ENCODE measurements at regions of chr13 and their contacts with region 1.

Region 1: DNA sequence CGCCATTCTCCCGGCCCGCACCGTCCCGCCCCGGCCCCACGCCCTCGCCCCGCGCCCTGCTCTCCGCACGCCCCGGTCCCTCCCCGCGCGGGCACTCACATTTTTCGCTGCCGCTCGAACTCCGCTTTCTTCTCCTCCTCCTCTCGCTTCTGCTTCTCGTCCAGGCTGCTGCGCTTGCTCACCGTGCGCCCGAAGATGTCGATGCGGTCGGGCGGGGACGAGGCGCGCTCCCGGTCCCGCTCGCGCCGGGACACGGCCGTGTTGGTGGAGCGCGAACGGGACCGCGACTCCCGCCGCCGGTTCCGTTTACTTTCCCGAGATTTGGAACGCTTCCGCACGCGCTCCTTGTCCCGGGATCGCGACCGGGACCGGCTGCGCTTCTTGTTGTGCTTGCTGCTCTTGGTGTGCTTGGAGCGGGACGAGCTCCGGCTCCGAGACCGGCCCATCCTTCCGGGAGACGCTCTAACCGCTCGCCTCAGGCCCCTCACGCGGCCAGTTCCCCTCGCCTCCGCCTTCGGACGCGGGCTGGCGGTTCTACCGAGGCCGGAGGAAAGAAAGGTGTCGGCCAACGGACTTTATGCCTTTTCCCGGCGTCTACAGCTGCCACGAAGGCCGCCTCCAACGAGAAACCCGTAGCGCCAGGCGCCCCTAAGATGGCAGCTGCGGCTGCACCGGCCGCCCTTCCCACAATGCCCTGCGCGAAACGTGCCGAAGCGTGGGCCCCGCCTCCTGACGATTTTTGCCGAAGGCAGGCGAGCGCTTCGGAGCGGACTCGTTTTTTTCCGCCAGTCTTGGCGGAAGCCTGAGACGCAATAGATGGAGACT is at the start of gene ARGLU1:
- DNase-seq: peak; percentile 95
- H3K4me3 Mint-ChIP-seq: peak within 1 kb of the TSS; percentile 92
- H3K27ac Mint-ChIP-seq: peak within 1 kb of the TSS; percentile 96
- H3K4me1 Mint-ChIP-seq: peaks cover 45% of the 10 kb centered on the region
- H3K27me3 Mint-ChIP-seq: no peaks in the 10 kb centered on the region
- total RNA-seq, gene ARGLU1: 119 to 132 TPM

Region 2: DNA sequence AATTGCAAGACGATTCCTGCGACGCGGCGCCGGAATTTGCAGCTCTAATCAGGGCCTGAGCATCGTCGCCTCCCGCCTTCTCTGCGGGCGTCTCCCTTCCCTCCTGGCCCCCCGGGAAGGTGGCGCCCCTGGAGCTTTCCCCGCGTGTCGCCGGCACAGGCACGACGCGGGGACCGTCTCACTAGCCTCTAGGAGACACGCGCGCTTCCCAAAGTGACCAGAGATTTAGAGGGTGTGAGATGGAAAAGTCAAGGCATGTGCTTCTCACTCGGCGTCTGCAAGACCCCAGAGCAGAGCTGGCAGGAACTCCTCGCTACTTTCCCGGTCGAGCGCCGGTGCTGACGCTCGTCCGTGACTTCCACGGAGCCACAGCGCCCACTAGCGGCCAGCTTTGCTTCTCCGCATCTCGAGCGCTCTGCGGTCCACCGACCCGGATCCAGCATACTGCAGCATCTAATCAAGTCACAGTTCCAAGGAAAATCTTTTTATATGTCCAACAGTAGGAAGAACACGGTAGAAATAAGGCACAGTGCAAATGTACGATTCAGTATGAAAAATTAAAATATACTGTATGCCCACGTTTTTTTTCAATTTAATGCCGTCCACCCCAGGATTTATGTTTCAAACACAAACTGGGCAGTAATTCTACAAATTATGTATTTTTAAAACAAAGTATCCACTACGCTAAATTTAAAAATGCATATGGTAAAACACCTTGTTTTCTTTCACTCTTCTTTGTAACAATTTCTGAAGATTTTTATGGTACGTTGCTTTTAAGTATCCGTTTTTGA is 31.2 kb before region 1 on chr13:
- CTCF ChIA-PET with region 1: interaction called, 30 read pairs
- POLR2A ChIA-PET with region 1: no interaction called
- DNase-seq: peak; percentile 86
- H3K4me3 Mint-ChIP-seq: peak overlapping the region; percentile 83
- H3K27ac Mint-ChIP-seq: peak overlapping the region; percentile 83
- H3K4me1 Mint-ChIP-seq: peaks cover 16% of the 10 kb centered on the region
- H3K27me3 Mint-ChIP-seq: peaks cover 30% of the 10 kb centered on the region

Region 3: GRCh38 chr13:106640515-106640914 is 72.8 kb after region 1 on chr13:
- CTCF ChIA-PET with region 1: no interaction called
- POLR2A ChIA-PET with region 1: no interaction called
- DNase-seq: no peak
- H3K4me3 Mint-ChIP-seq: no peak overlapping the region
- H3K27ac Mint-ChIP-seq: no peak overlapping the region
- H3K4me1 Mint-ChIP-seq: no peaks in the 10 kb centered on the region
- H3K27me3 Mint-ChIP-seq: peaks cover 2% of the 10 kb centered on the region

Measured in activated CD4-positive, alpha-beta T cell treated with anti-CD3 and anti-CD28 coated beads, Interleukin-2, amount 10 ng/mL, durations not matched to agents 7 days and 5 days (primary cell).